Mucosa of descending colon (tissue), 3 donors: ENCODE measurements at regions of chr1 and their contacts with region 1.

Region 1: GRCh38 chr1:113042285-113043143 is 30.5 kb upstream of the LRIG2 start:
- DNase-seq: peak; percentile 65 to 85 (median 81)
- ATAC-seq: peak; percentile 92
- H3K4me3 ChIP-seq: no peak overlapping the region
- H3K4me1 ChIP-seq: peaks cover 17% of the 10 kb centered on the region
- CTCF ChIP-seq: peak; percentile 47

Region 2: GRCh38 chr1:112715264-112716053 is 327.1 kb before region 1 on chr1 and contains the start of gene PPM1J:
- intact Hi-C with region 1: loop called in 1 of 2 experiments (anchors 10 kb)
- DNase-seq: peak; percentile 99 to 100 (median 100)
- ATAC-seq: peak; percentile 89
- H3K4me3 ChIP-seq: no peak within 1 kb of the TSS
- H3K4me1 ChIP-seq: peaks cover 12% of the 10 kb centered on the region
- CTCF ChIP-seq: no peak
- total RNA-seq, gene PPM1J: 0.92 to 1.7 (median 1.1) TPM

Region 3: GRCh38 chr1:112882271-112882744 is 160.2 kb before region 1 on chr1:
- intact Hi-C with region 1: loop called (anchors 2 to 5 kb)
- DNase-seq: no peak
- ATAC-seq: peak; percentile 10
- H3K4me3 ChIP-seq: no peak overlapping the region
- H3K4me1 ChIP-seq: peaks cover 27% of the 10 kb centered on the region
- CTCF ChIP-seq: no peak